A549 (cell line): ENCODE measurements at regions of chr20 and their contacts with region 1.

Region 1: DNA sequence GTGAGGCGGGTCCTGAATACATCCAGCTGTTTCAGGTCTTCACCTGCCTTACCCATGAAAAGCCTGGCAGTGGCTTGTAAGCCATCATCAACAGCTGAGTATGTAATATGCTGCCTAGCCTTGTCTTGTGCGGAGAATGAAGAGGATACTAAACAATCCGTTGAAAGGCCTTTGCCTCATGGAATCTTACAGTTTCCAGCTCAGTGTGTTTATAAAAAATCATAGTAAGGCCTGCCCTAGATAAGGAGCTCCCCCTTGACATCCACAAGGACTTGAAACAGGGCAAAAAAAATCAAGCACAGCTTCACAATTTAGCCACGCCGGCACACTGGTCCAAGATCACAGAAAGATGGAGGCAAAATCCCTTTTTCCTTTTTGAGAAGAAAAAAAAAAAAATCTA is 115.7 kb downstream of the KIF16B start:
- DNase-seq: no peak
- ATAC-seq: no peak
- H3K4me3 ChIP-seq: no peak overlapping the region
- H3K27ac ChIP-seq: no peak overlapping the region
- H3K4me1 ChIP-seq: peaks cover 13% of the 10 kb centered on the region
- CTCF ChIP-seq: no peak
- EP300 ChIP-seq: no peak
- POLR2A ChIP-seq: no peak
- RAD21 ChIP-seq: no peak

Region 2: GRCh38 chr20:16476032-16476431 is 18.5 kb after region 1 on chr20:
- CTCF ChIA-PET with region 1: interaction called, 11 read pairs
- POLR2A ChIA-PET with region 1: no interaction called
- DNase-seq: peak; percentile 30 to 64
- ATAC-seq: peak; percentile 74 to 87
- H3K4me3 ChIP-seq: no peak overlapping the region
- H3K27ac ChIP-seq: no peak overlapping the region
- H3K4me1 ChIP-seq: peaks cover 20% of the 10 kb centered on the region
- CTCF ChIP-seq: peak; percentile 85
- EP300 ChIP-seq: no peak
- POLR2A ChIP-seq: no peak
- RAD21 ChIP-seq: peak; percentile 75 to 87